Mammary epithelial cell (primary cell): ENCODE measurements at regions of chr3 and their contacts with region 1.

Region 1: GRCh38 chr3:143895805-143896204 is 47.5 kb upstream of the SLC9A9 start:
- DNase-seq: no peak
- H3K4me3 ChIP-seq: no peak overlapping the region
- H3K27ac ChIP-seq: no peak overlapping the region
- H3K4me1 ChIP-seq: peaks cover 7% of the 10 kb centered on the region
- H3K27me3 ChIP-seq: no peaks in the 10 kb centered on the region
- CTCF ChIP-seq: peak in 1 of 2 donors; percentile 37

Region 2: DNA sequence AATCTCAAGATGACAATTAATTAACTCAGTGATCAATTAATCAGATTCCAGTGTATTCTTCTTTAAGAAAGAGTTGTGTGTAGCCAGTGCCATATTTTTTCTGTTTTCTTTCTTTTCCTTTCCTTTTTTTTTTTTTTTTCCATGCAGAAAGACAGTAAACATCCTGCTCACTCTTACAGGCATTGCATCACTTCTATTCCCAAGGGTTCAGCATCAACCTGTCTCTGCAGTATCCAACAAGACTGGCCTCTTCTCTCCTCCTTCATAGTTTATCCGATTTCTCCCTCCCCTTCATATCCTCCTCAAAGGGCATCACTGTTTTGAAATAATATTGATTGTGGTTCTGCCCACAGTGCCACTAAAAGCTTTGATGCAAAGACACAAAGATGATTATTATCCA is 30.5 kb before region 1 on chr3:
- CTCF ChIA-PET with region 1: no interaction called
- dilution Hi-C with region 1: no loop called
- in situ Hi-C with region 1: no loop called
- intact Hi-C with region 1: no loop called
- DNase-seq: no peak
- H3K4me3 ChIP-seq: no peak overlapping the region
- H3K27ac ChIP-seq: no peak overlapping the region
- H3K4me1 ChIP-seq: no peaks in the 10 kb centered on the region
- H3K27me3 ChIP-seq: no peaks in the 10 kb centered on the region
- CTCF ChIP-seq: no peak

Region 3: DNA sequence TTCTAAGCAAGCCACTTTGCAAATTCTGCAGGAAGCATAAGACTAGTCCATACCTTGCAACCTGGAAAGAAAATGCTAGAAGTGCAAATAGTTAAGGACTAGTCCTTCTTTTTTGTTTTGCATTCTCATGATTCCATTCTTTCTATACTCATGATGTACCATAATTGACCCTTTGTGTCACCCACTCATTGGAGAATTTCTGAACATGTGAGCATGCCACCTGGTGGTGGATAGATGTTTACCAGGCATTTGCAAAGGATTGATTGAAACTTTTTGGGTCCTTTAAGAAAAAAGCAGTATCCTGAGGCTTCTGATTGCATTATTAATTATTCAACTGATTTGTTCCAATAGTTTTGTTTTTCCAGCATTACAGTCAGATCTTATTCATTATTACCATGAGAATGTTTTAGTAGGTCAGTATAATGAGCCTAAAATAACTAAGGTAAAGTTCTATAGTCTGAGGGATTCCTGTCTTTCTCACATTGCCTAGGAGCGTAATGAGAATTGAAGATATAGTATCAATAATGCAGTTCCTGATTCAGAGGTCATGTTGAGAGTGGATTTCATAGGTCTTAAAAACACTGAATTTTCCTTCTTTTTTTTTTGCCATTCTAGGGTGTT is 55.7 kb after region 1 on chr3:
- CTCF ChIA-PET with region 1: no interaction called
- dilution Hi-C with region 1: no loop called
- in situ Hi-C with region 1: no loop called
- intact Hi-C with region 1: loop called (anchors 1 kb)
- DNase-seq: peak; percentile 28
- H3K4me3 ChIP-seq: no peak overlapping the region
- H3K27ac ChIP-seq: no peak overlapping the region
- H3K4me1 ChIP-seq: no peaks in the 10 kb centered on the region
- H3K27me3 ChIP-seq: no peaks in the 10 kb centered on the region
- CTCF ChIP-seq: peak; percentile 71 to 85

Region 4: GRCh38 chr3:145767909-145768308 is 1872.1 kb after region 1 on chr3:
- CTCF ChIA-PET with region 1: no interaction called
- dilution Hi-C with region 1: no loop called
- in situ Hi-C with region 1: no loop called
- intact Hi-C with region 1: loop called (anchors 10 kb)
- DNase-seq: no peak
- H3K4me3 ChIP-seq: no peak overlapping the region
- H3K27ac ChIP-seq: no peak overlapping the region
- H3K4me1 ChIP-seq: no peaks in the 10 kb centered on the region
- H3K27me3 ChIP-seq: peaks cover 1% of the 10 kb centered on the region
- CTCF ChIP-seq: peak in 1 of 2 donors; percentile 39